ENCODE measurements at regions of chr19 and their contacts with region 1.

Region 1: GRCh38 chr19:1465191-1466016 is 13.6 kb downstream of the C19orf25 start:
- DNase-seq: peak; percentile 63
- ATAC-seq: no peak
- H3K4me3 Mint-ChIP-seq: no peak overlapping the region
- H3K27ac Mint-ChIP-seq: no peak overlapping the region
- H3K4me1 Mint-ChIP-seq: peaks cover 3% of the 10 kb centered on the region
- H3K27me3 Mint-ChIP-seq: peaks cover 3% of the 10 kb centered on the region

Region 2: DNA sequence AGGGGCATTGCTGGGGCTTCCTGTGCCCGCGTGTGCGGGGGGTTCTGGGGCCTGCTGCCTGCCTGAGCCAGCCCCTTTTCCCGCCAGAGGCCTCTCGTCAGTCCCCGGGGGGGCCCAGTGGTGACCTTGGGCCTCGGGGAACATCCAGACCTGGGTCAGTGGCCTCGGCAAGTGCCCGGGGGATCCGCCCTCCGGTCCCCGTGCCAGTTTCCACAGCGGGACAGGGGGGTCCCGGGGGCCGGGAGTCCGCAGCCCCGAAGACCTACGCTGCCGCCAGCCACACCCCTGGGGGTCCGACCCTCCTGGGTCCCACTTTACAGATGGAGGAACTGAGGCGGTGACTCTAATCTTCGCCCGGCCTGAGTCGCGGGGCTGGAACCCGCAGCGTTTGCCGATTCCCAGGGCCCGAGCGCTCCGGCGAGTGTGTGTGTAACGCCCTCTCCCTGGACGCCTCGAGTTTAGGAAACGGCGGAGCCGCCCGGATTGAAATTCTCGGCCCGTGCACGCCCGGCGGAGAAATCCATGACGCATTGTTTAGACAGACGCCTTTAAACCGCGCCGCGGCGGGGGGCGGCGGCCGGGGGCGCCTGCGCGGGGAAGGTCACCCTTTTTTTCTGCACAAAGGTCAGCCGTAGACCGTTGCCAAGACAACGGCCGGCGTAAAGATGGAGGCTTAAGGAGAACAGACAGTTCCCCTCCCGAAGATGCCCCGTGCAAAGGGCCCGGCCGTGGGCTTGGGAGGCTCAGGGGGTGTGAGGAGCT is 140.4 kb before region 1 on chr19:
- CTCF ChIA-PET with region 1: no interaction called
- POLR2A ChIA-PET with region 1: no interaction called
- intact Hi-C with region 1: no loop called
- DNase-seq: peak; percentile 52
- ATAC-seq: peak; percentile 36
- H3K4me3 Mint-ChIP-seq: no peak overlapping the region
- H3K27ac Mint-ChIP-seq: no peak overlapping the region
- H3K4me1 Mint-ChIP-seq: no peaks in the 10 kb centered on the region
- H3K27me3 Mint-ChIP-seq: peaks cover 22% of the 10 kb centered on the region

Region 3: GRCh38 chr19:1481893-1482360 is 16.5 kb after region 1 on chr19:
- CTCF ChIA-PET with region 1: no interaction called
- POLR2A ChIA-PET with region 1: no interaction called
- intact Hi-C with region 1: no loop called
- DNase-seq: no peak
- ATAC-seq: no peak
- H3K4me3 Mint-ChIP-seq: no peak overlapping the region
- H3K27ac Mint-ChIP-seq: no peak overlapping the region
- H3K4me1 Mint-ChIP-seq: peaks cover 6% of the 10 kb centered on the region
- H3K27me3 Mint-ChIP-seq: no peaks in the 10 kb centered on the region

Region 4: GRCh38 chr19:1760020-1760419 is 294.6 kb after region 1 on chr19:
- CTCF ChIA-PET with region 1: no interaction called
- POLR2A ChIA-PET with region 1: no interaction called
- intact Hi-C with region 1: loop called in 1 of 2 experiments (anchors 5 kb)
- DNase-seq: no peak
- ATAC-seq: no peak
- H3K4me3 Mint-ChIP-seq: no peak overlapping the region
- H3K27ac Mint-ChIP-seq: no peak overlapping the region
- H3K4me1 Mint-ChIP-seq: peaks cover 5% of the 10 kb centered on the region
- H3K27me3 Mint-ChIP-seq: peaks cover 64% of the 10 kb centered on the region

Region 5: GRCh38 chr19:2050991-2051772 is 585.8 kb after region 1 on chr19 and contains the start of gene MKNK2:
- CTCF ChIA-PET with region 1: no interaction called
- POLR2A ChIA-PET with region 1: no interaction called
- intact Hi-C with region 1: no loop called
- DNase-seq: peak; percentile 98
- ATAC-seq: peak; percentile 80
- H3K4me3 Mint-ChIP-seq: peak within 1 kb of the TSS; percentile 82
- H3K27ac Mint-ChIP-seq: peak within 1 kb of the TSS; percentile 94
- H3K4me1 Mint-ChIP-seq: peaks cover 51% of the 10 kb centered on the region
- H3K27me3 Mint-ChIP-seq: no peaks in the 10 kb centered on the region
- total RNA-seq, gene MKNK2: 139 to 155 TPM